Calu3 (cell line): ENCODE measurements at regions of chr18 and their contacts with region 1.

Region 1: DNA sequence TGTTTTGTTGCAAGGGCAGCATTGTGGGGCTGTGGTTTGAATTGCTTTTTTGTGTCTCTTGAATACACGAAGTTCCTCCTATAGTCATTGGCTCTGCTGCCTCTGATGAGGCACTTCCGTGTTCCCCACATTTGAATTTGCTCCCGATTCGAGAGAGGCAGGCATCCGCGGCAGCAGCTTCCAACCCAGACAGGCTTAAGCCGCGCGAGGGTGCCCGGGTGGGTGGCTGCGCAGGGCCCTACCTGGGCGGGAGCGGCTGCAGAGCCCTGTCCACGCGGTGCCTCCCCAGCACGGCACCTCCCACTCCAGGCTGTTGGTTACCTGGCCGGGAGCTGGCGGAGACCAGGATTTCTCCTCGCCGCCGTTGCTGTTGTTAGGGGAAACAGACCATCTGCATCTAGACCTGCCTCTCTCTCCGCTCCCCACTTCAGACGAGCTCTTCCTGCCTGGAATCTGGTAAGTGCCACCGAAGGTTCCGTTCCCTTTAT is 151.3 kb downstream of the NEDD4L start:
- DNase-seq: peak; percentile 54
- H3K4me3 Mint-ChIP-seq: peak overlapping the region; percentile 89
- H3K27ac Mint-ChIP-seq: peak overlapping the region; percentile 67
- H3K4me1 Mint-ChIP-seq: peaks cover 57% of the 10 kb centered on the region
- H3K27me3 Mint-ChIP-seq: no peaks in the 10 kb centered on the region
- CTCF ChIP-seq: no peak

Region 2: GRCh38 chr18:58211510-58212104 is 16.3 kb after region 1 on chr18:
- CTCF ChIA-PET with region 1: interaction called, 7 read pairs
- intact Hi-C with region 1: loop called (anchors 2 kb)
- DNase-seq: no peak
- H3K4me3 Mint-ChIP-seq: peak overlapping the region; percentile 9
- H3K27ac Mint-ChIP-seq: peak overlapping the region; percentile 57
- H3K4me1 Mint-ChIP-seq: peaks cover 92% of the 10 kb centered on the region
- H3K27me3 Mint-ChIP-seq: no peaks in the 10 kb centered on the region
- CTCF ChIP-seq: no peak

Region 3: GRCh38 chr18:58221060-58221725 is 25.9 kb after region 1 on chr18:
- CTCF ChIA-PET with region 1: interaction called, 10 read pairs
- intact Hi-C with region 1: no loop called
- DNase-seq: peak; percentile 79
- H3K4me3 Mint-ChIP-seq: peak overlapping the region; percentile 79
- H3K27ac Mint-ChIP-seq: peak overlapping the region; percentile 91
- H3K4me1 Mint-ChIP-seq: peaks cover 81% of the 10 kb centered on the region
- H3K27me3 Mint-ChIP-seq: no peaks in the 10 kb centered on the region
- CTCF ChIP-seq: no peak

Region 4: GRCh38 chr18:58231930-58232329 is 36.6 kb after region 1 on chr18:
- CTCF ChIA-PET with region 1: interaction called, 4 read pairs
- intact Hi-C with region 1: loop called (anchors 2 kb)
- DNase-seq: peak; percentile 41
- H3K4me3 Mint-ChIP-seq: no peak overlapping the region
- H3K27ac Mint-ChIP-seq: peak overlapping the region; percentile 91
- H3K4me1 Mint-ChIP-seq: peaks cover 83% of the 10 kb centered on the region
- H3K27me3 Mint-ChIP-seq: no peaks in the 10 kb centered on the region
- CTCF ChIP-seq: no peak

Region 5: DNA sequence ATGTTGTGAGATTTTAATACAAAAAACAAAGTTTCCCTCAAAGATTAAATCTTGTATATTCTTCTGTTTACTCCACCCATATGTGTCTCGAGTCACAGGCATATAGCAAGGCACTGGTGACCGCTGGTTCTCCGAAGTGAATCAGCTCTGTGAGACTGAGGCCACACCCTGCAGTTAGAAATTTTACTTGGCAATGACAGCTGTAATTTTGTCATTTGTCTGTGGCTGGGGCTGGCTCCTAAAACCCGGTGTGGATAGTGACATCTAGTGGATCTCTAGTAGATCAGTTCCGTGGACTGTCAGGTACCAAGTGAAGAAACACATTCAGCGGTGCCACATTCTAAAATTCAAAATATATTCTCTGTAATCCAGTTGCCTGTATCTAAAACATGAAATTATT is 126.7 kb after region 1 on chr18:
- CTCF ChIA-PET with region 1: interaction called, 4 read pairs
- intact Hi-C with region 1: loop called (anchors 5 kb)
- DNase-seq: peak; percentile 70
- H3K4me3 Mint-ChIP-seq: no peak overlapping the region
- H3K27ac Mint-ChIP-seq: peak overlapping the region; percentile 41
- H3K4me1 Mint-ChIP-seq: peaks cover 37% of the 10 kb centered on the region
- H3K27me3 Mint-ChIP-seq: no peaks in the 10 kb centered on the region
- CTCF ChIP-seq: peak; percentile 54